GM18951 (cell line): ENCODE measurements at regions of chr3 and their contacts with region 1.

Region 1: GRCh38 chr3:192816351-192816750 is 89.0 kb upstream of the FGF12 start:
- POLR2A ChIP-seq: no peak

Region 2: DNA sequence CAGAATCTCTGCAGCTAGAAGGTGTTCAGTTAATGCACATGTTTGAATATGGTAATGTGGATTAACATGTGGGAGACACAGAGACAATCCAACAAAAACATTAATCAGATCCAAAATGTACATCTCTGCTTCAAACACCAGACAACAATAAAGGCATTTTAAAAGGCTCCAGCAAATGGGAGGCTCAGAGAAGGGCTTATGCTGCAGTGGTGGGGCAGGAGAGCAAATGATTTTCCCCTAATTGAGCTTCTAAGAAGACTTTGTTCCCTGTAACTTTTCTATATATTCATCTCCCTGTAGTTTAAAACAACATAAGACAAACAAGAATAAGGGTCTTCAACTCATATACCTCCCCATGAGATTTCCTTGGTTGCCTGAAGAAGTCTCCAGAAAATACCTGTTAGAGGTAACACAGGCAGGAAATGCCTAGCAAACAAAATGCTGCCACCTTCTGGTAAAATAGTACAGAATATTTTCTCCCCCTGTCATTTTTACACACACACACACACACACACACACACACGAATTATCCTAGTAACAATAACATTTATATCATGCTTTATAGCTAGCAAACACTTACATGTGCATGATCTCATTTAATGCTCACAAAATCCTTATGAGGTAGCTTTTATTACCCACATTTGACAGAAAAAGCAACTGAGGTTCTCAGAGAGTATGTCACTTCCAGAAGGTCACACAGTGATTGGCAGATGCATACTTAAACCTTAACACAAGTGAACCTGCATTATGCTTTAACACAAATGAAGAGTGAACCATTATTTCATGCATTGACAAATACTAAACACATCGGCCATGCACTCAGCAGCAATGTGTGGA is 224.7 kb after region 1 on chr3:
- in situ Hi-C with region 1: loop called (anchors 5 kb)
- POLR2A ChIP-seq: no peak